ENCODE measurements at regions of chr6 and their contacts with region 1.

Region 1: DNA sequence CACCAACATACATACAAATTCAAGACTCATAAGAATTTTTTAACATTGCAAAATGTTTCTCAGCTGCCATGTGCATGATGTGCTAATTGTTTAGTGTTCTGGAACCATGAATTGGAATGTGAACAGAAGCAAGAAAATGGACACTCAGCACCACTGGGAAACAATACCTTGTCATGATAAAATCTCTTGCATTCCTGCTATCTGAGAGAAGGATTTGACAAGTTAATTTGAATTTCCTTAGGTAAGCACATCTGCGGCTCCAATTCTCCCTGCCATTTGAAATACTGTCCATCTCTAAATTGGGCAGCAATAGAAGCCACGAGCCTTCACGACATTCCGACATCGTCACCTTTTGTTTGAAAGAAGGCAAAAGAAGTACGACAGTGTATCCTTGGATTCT is 1104.6 kb upstream of the MAP3K7 start:
- DNase-seq: no peak
- ATAC-seq: no peak
- H3K4me3 ChIP-seq: no peak overlapping the region
- H3K27ac ChIP-seq: no peak overlapping the region
- H3K4me1 ChIP-seq: no peaks in the 10 kb centered on the region
- H3K27me3 ChIP-seq: no peaks in the 10 kb centered on the region
- CTCF ChIP-seq: no peak

Region 2: DNA sequence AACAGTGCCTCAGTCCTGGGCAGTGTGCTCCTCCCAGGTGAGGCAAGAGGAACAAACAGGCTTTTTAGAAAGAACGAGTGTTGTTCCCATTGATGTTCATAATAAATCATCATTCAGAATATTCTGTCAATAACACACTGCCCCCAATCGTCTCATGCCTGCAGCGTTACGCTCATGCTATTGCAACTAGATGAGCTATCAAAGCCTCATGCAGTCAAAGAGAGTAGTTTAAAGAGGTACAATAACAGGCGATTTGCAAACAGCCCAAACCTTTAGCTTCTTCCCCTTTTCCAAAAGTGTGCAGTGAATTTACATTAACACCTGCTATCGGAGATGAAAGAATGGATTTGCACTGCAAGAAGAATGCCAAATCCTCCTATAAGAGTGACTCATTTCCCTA is 60.1 kb after region 1 on chr6:
- intact Hi-C with region 1: no loop called
- DNase-seq: no peak
- ATAC-seq: peak in 1 of 4 donors; percentile 21
- H3K4me3 ChIP-seq: no peak overlapping the region
- H3K27ac ChIP-seq: no peak overlapping the region
- H3K4me1 ChIP-seq: no peaks in the 10 kb centered on the region
- H3K27me3 ChIP-seq: no peaks in the 10 kb centered on the region
- CTCF ChIP-seq: no peak

Region 3: GRCh38 chr6:93654548-93654947 is 1963.1 kb after region 1 on chr6:
- intact Hi-C with region 1: loop called in 1 of 2 experiments (anchors 5 kb)
- DNase-seq: no peak
- ATAC-seq: no peak
- H3K4me3 ChIP-seq: no peak overlapping the region
- H3K27ac ChIP-seq: no peak overlapping the region
- H3K4me1 ChIP-seq: no peaks in the 10 kb centered on the region
- H3K27me3 ChIP-seq: no peaks in the 10 kb centered on the region
- CTCF ChIP-seq: no peak

Measured in psoas muscle (tissue), 8 donors.